Endothelial cell of umbilical vein (primary cell): ENCODE measurements at regions of chr7 and their contacts with region 1.

Region 1: DNA sequence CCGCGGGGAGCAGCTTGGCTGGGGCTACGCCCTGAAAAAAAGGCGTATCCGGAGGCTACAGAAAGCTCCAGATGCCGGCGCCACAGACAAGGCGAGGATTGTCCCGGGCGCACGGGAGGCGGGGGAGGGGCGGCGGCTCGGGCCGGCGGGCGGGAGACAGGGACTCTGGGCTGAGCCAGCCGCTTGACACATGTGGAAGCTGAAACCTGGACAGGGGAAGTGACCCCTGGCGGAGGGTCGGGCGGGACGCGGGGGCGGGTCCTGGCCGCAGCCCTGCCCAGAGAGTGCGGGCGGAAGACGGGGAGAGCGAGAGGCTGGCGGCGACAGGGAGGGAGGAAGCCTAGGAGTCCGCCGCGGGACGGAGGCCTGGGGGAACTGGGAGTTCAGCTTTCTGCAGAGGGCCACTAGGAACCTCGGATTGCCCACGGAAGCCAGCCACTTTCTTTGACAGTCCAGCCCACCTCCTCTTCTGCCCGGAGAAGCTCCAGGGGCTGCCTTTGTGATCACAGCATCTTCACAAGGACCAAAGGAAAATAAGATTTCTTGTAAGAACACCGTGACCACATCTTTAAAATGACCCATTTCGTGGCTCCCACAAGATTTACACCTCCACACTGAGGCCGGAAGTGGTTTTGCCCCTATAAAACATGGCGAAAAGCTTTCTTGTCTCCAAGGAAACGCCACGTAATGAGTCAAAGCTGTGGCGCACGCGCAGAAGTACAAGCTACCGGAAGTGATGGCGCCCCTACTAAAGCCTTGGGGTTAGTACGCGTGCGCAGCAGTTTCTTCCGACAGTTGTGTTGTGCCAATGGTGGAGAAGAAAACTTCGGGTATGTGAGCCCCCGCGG is at the starts of genes PLOD3 and ZNHIT1:
- DNase-seq: peak; percentile 98
- H3K4me3 ChIP-seq: peak within 1 kb of the TSS; percentile 75 to 84 (median 78)
- H3K27ac ChIP-seq: peak within 1 kb of the TSS; percentile 79
- H3K4me1 ChIP-seq: peaks cover 13% of the 10 kb centered on the region
- H3K27me3 ChIP-seq: no peaks in the 10 kb centered on the region
- CTCF ChIP-seq: peak in 1 of 2 donors; percentile 10
- POLR2A ChIP-seq: peak; percentile 87
- total RNA-seq, gene PLOD3: 161 and 170 TPM in 2 replicates
- total RNA-seq, gene ZNHIT1: 89.9 and 90.5 TPM in 2 replicates

Region 2: DNA sequence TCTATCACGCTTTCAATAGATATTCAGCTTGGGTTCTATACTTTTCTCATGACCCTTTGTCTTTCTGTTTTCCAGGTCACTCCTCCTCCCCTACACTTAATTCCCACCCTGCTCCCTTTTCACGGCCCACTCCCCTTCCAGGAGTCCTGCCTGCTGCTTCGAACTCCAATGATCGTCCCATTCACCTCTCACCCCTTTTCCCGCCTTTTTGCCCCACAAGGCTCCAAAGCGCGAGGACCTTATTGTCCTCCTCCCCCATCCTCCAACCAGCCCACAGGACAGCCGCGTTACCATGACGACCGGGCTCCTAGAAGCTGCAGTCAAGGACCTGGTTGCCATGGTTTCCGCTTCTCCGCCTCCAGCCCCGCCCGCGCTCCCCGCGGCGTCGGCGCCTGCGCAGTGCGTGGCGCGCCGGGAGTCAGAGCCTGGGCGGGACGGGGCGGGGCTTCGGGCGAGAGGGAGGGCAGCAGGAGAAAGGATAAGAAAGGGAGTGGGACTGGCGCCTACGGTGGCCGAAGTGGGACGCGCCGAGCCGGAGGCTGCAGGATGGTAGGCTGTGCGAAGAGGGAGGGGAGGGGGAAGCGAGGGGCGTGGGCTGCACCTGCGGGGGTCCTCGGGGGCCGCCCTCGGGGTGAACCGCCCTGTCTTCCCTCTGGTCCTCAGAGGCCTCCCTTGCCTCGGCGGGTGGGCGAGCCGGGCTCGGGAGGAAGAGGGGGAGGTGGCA is 63.5 kb before region 1 on chr7 and contains the start of gene AP1S1:
- CTCF ChIA-PET with region 1: interaction called, 10 read pairs
- POLR2A ChIA-PET with region 1: interaction called, 5 read pairs
- dilution Hi-C with region 1: no loop called
- intact Hi-C with region 1: no loop called
- DNase-seq: peak; percentile 95
- H3K4me3 ChIP-seq: peak within 1 kb of the TSS; percentile 61 to 84 (median 63)
- H3K27ac ChIP-seq: no peak within 1 kb of the TSS
- H3K4me1 ChIP-seq: peaks cover 6% of the 10 kb centered on the region
- H3K27me3 ChIP-seq: peaks cover 0 to 4% of the 10 kb centered on the region in 2 experiments
- CTCF ChIP-seq: no peak
- POLR2A ChIP-seq: no peak
- total RNA-seq, gene AP1S1: 70.9 and 93.3 TPM in 2 replicates

Region 3: GRCh38 chr7:101235050-101235449 is 17.4 kb after region 1 on chr7:
- CTCF ChIA-PET with region 1: interaction called, 23 read pairs
- POLR2A ChIA-PET with region 1: no interaction called
- dilution Hi-C with region 1: no loop called
- intact Hi-C with region 1: loop called (anchors 1 kb)
- DNase-seq: peak; percentile 27
- H3K4me3 ChIP-seq: no peak overlapping the region
- H3K27ac ChIP-seq: no peak overlapping the region
- H3K4me1 ChIP-seq: peaks cover 38% of the 10 kb centered on the region
- H3K27me3 ChIP-seq: no peaks in the 10 kb centered on the region
- CTCF ChIP-seq: peak; percentile 20 to 50
- POLR2A ChIP-seq: no peak

Region 4: DNA sequence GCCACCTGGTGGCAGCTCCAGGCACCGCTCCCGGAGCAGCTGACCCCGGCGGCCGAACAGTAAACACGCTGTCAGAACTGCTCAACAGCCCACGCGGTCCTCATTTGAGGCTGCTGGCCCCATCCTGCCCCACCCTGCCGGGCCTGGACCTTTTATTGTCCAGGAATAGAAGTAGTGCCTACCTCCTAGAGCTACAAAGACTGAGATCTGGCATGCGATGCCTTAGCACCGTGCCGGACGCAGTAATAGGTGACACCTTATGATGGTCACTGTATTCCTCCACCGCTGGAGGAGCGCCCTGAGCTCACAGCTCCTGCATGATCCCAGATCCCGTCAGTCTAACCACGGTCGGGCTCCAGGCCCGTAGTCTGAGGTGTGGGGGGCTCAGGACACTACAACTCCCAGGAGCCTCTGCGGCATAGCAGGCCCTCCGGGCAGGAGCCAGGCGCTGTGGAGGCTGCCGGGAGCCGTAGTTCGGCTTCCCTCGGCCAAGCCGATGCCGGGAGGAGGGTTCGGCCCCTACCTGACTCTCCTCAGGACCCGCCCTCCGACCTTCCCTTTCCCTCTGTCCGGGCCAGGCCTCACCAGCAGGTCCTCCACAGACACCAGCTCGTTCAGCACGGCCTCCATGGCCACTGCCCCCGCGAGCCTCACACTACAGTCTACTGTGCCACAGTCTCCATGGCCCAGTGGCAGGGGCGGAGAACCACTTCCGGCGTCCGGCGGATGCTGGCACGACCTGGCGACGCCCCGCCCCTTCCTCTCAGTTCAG is 26.9 kb after region 1 on chr7 and contains the start of gene FIS1:
- CTCF ChIA-PET with region 1: interaction called, 112 read pairs
- POLR2A ChIA-PET with region 1: interaction called, 12 read pairs
- dilution Hi-C with region 1: no loop called
- intact Hi-C with region 1: loop called (anchors 1 kb)
- DNase-seq: peak; percentile 93
- H3K4me3 ChIP-seq: peak within 1 kb of the TSS; percentile 64 to 89 (median 76)
- H3K27ac ChIP-seq: peak within 1 kb of the TSS; percentile 63
- H3K4me1 ChIP-seq: peaks cover 20% of the 10 kb centered on the region
- H3K27me3 ChIP-seq: no peaks in the 10 kb centered on the region
- CTCF ChIP-seq: peak; percentile 95 to 96
- POLR2A ChIP-seq: peak; percentile 96
- total RNA-seq, gene FIS1: 132 and 187 TPM in 2 replicates

Region 5: DNA sequence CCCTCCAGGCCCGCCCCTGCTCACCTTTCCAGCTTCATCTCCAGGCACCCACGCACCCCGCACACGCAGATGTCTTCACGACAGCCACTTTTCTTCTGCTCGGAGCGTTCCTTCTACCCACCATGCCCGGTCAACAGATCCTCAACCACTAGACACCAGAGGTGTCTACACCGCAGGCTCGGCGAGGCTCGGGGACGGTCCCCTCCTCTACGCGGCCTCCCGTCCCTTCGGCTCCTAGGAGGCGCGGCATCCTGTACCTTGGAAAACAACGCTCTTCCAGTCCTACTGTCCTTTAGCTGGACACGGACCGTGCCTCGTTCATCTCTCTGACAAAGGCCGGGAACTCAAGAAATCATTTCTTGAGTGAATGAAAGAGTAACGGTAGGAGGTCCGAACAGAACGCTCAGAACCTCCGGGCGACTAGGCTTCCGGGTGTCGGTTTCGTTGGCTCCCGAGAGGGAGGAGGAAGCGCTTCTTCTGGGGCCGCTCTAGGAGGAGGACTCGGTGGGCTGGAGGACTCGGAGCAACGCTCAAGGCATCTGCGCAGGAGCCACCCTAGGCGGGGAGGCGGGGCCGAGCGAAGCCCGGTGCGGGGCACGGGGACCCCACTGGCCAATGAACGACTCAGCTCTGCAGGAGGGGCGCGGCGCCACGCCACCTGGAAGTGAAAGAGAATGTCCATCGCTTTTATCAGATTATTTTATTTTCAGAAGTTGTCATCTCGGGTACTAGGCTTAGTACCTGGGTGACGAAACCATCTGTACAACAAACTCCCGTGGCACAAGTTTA is 34.5 kb after region 1 on chr7:
- CTCF ChIA-PET with region 1: interaction called, 4 read pairs
- POLR2A ChIA-PET with region 1: no interaction called
- dilution Hi-C with region 1: no loop called
- intact Hi-C with region 1: loop called (anchors 1 kb)
- DNase-seq: peak; percentile 99
- H3K4me3 ChIP-seq: peak overlapping the region; percentile 67 to 98 (median 89)
- H3K27ac ChIP-seq: peak overlapping the region; percentile 52
- H3K4me1 ChIP-seq: peaks cover 4% of the 10 kb centered on the region
- H3K27me3 ChIP-seq: no peaks in the 10 kb centered on the region
- CTCF ChIP-seq: no peak
- POLR2A ChIP-seq: peak; percentile 76